Cardiac septum (tissue), 1 donor: ENCODE measurements at regions of chr2 and their contacts with region 1.

Region 1: GRCh38 chr2:108988796-108989713 is at the start of gene EDAR:
- DNase-seq: no peak
- total RNA-seq, gene EDAR: not detected

Region 2: GRCh38 chr2:108813732-108814131 is 175.3 kb before region 1 on chr2:
- intact Hi-C with region 1: no loop called
- DNase-seq: no peak

Region 3: DNA sequence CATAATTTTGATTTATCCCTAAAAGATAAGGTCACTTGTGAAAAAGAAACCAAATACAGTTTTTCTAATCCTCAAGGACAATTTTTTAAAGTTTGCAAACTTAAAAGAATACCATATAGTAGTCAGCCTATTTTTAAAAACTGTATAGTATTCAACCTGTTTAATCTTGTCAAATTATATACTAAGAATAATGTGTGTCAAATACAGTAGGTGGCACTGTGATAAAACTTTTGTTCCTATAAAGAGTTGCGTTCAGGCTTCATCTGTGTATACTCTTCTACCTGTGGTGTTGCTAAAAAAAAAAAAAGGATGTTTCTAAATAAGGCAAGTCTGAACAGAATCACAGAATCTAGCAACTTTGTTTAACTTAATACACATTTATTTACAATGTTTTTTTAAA is 133.9 kb before region 1 on chr2:
- intact Hi-C with region 1: loop called (anchors 5 kb)
- DNase-seq: no peak

Region 4: GRCh38 chr2:108927936-108928659 is 61.0 kb before region 1 on chr2:
- intact Hi-C with region 1: loop called (anchors 2 kb)
- DNase-seq: peak; percentile 62